Head of caudate nucleus (tissue), 42 donors: ENCODE measurements at regions of chr17 and their contacts with region 1.

Region 1: GRCh38 chr17:47009759-47010594 is 30.9 kb upstream of the RPRML start:
- DNase-seq: peak in 1 of 42 donors; percentile 20

Region 2: DNA sequence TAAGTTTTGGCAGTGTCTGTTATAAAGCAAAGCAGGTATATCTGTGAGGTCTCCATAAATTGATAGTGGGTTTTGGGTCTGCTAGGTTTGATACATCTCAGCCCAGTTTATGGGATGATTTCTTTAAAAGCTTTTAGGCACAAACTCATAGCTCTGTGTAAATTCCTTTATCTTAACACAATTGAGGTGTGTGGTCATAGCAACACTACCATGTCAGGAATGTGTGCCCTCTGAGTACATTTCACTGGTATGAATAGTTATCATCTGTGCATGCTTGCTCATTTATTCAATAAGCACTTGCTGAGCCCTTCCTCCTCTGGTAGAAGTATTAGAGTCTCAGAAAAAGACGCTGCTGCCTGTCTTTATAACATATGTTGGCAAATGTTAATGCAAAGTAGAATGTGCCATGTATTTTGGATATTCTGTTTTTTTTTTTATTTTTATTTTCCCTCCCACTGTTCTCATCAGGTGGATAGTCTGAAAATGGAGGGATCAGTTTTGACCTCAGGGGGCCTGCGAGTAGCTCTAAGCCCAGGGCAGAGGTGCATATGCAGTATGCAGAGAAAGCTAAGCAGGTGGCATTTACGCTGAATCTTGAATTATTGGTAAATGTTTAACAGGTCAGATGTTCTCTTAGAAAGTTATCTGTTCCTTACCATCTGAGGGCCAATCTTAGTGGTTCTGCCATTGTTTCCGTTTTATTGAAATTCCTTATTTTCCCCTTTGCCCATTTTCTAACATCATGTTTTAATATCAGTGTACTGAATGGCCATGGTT is 282.2 kb before region 1 on chr17:
- intact Hi-C with region 1: no loop called
- DNase-seq: no peak

Region 3: DNA sequence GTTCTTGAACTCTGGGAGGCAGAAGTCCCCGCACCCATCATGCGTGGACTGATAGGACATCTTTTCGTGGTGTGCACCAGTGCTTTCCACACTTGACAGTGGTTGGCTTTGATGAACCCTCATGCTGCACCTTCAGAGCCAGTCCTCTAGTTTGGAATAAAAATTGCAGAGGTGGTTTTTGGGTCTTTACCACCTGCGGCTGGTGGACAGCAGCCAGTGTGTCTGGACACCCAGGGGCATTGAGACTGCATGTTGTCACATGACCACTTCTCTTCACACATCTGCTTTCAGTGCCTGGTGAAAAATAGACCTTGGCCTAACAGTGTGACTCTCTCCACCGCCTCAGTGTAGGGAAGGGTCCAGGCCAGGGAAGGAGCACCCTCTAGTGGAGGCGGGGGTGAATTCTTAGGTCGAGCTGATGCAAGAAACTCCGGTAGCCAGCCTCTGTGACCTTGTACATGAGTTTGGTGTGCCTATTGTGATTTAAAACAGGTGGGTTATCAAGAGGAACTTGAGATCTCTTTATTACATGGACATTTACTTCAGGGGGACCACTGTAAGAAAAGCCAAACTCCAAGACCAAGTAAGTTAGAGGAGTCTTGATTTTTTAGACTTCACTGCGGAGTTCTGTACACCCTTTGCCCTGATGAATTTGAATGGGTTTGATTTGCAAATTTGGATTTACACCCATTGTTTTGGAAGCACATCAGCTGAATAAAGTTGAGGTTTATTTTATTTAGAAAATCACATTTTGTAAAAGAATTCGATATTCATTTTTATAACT is 69.2 kb before region 1 on chr17:
- intact Hi-C with region 1: loop called (anchors 10 kb)
- DNase-seq: peak; percentile 42 to 90 (median 78)